Sciatic nerve (tissue), 2 donors: ENCODE measurements at regions of chr17 and their contacts with region 1.

Region 1: GRCh38 chr17:1122533-1123392 is 57.0 kb downstream of the ABR start:
- DNase-seq: peak; percentile 92
- ATAC-seq: peak; percentile 90

Region 2: GRCh38 chr17:1160591-1161041 is 37.9 kb after region 1 on chr17:
- intact Hi-C with region 1: no loop called
- DNase-seq: no peak
- ATAC-seq: no peak

Region 3: GRCh38 chr17:1173432-1174262 is 50.9 kb after region 1 on chr17:
- intact Hi-C with region 1: no loop called
- DNase-seq: no peak
- ATAC-seq: peak; percentile 22

Region 4: DNA sequence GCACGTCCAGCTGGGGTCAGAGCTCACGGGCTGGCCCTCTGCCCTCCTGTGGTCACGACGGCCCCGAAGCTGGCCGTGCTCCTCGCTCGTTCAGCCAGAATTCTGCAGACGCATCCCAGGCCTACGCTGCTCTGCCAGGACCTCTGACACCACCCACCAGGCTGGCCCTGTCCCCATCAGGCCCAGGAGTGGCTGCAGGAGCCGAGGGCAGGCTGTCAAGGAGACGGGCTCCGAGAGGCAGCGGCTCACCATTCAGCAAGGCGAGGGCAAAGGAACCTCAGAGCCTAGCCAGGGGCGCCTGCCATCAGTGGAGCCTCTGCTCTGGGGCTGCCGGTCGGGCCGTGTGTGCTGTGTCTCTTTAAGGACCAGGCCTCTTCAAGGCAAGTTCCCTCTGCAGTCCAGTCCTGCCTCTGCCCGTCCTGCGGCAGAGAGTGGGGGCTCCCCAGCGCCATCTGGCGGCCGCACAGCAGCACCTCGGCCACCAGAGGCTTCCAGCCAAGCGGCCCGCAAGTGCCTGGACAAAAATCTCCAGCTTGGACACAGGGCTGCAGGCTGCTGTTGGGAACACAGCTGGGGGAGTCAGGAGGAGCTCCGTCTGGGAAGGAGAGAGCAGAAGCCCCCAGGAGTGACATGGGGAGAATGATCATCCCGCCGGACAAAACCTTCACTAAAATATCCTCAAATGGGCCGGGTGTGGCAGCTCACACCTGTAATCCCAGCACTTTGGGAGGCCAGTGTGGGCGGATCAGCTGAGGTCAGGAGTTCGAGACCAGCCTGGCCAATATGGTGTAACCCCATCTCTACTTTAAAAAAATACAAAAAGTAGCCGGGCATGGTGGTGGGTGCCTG is 64.4 kb after region 1 on chr17:
- intact Hi-C with region 1: loop called (anchors 5 kb)
- DNase-seq: peak; percentile 91
- ATAC-seq: peak; percentile 89

Region 5: GRCh38 chr17:2172077-2172851 is 1049.5 kb after region 1 on chr17:
- intact Hi-C with region 1: no loop called
- DNase-seq: peak; percentile 86
- ATAC-seq: peak; percentile 72